ENCODE measurements at regions of chr22 and their contacts with region 1.

Region 1: GRCh38 chr22:19178656-19179496 is at the start of gene SLC25A1:
- DNase-seq: peak; percentile 85 to 86
- H3K4me3 ChIP-seq: peak within 1 kb of the TSS; percentile 78 to 86 (median 85)
- H3K27ac ChIP-seq: peak within 1 kb of the TSS; percentile 91 to 98
- H3K4me1 ChIP-seq: peaks cover 7 to 26% of the 10 kb centered on the region in 2 donors
- H3K27me3 ChIP-seq: no peaks in the 10 kb centered on the region
- CTCF ChIP-seq: peak in 1 of 3 donors; percentile 8
- POLR2A ChIP-seq: no peak
- total RNA-seq, gene SLC25A1: 49.2 to 140 (median 50.2) TPM

Region 2: DNA sequence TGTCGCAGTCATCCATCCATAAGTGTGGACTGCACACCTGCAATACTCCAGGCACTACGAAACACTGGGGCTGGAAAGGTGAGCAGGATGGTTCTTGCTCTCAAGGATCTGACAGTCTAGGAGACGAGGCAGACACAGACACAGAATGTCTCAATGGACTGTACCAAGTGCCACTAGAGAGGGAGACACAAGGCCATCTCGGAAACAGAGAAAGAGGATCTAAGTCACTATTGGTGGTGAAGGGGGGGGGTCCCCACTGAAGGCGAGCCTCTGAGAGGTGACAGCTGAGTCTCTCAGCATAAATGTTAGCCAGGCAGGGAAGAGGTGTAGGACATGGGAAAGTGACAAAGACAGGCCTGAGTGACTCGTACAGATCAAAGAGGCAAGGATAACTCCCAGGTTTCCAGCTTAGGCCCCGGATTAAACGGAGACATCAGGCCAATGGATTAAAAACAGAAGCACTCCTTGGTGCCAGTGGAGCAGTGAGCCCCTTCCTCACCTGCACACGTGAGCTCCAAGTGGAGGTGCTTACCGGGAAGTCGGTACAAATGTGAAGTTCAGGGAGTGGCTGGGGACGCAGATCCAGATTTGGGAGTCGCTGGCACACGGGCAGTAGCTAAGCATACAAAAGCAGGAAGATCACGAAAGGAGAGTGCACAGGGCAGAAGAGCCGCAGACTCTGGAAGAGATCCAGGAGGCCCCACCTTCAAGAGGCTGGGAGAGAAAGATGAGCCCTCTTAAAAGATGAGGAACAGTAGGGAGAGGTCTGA is 1271.7 kb before region 1 on chr22:
- intact Hi-C with region 1: loop called (anchors 5 kb)
- DNase-seq: no peak
- H3K4me3 ChIP-seq: no peak overlapping the region
- H3K27ac ChIP-seq: no peak overlapping the region
- H3K4me1 ChIP-seq: peaks cover 10 to 15% of the 10 kb centered on the region in 2 donors
- H3K27me3 ChIP-seq: no peaks in the 10 kb centered on the region
- CTCF ChIP-seq: no peak
- POLR2A ChIP-seq: no peak

Measured in breast epithelium (tissue), 4 donors.